Activated CD8-positive, alpha-beta T cell treated with anti-CD3 and anti-CD28 coated beads for 36 hours (primary cell): ENCODE measurements at regions of chrX and their contacts with region 1.

Region 1: GRCh38 chrX:149512225-149512885 is 7.2 kb upstream of the IDS start:
- DNase-seq: peak; percentile 69
- ATAC-seq: peak; percentile 71
- H3K4me3 Mint-ChIP-seq: no peak overlapping the region
- H3K27ac Mint-ChIP-seq: peak overlapping the region; percentile 78
- H3K4me1 Mint-ChIP-seq: peaks cover 46% of the 10 kb centered on the region
- H3K27me3 Mint-ChIP-seq: no peaks in the 10 kb centered on the region
- CTCF ChIP-seq: peak; percentile 53

Region 2: GRCh38 chrX:149313871-149314371 is 198.4 kb before region 1 on chrX:
- CTCF ChIA-PET with region 1: no interaction called
- POLR2A ChIA-PET with region 1: no interaction called
- intact Hi-C with region 1: no loop called
- DNase-seq: no peak
- ATAC-seq: no peak
- H3K4me3 Mint-ChIP-seq: no peak overlapping the region
- H3K27ac Mint-ChIP-seq: no peak overlapping the region
- H3K4me1 Mint-ChIP-seq: no peaks in the 10 kb centered on the region
- H3K27me3 Mint-ChIP-seq: no peaks in the 10 kb centered on the region
- CTCF ChIP-seq: no peak

Region 3: DNA sequence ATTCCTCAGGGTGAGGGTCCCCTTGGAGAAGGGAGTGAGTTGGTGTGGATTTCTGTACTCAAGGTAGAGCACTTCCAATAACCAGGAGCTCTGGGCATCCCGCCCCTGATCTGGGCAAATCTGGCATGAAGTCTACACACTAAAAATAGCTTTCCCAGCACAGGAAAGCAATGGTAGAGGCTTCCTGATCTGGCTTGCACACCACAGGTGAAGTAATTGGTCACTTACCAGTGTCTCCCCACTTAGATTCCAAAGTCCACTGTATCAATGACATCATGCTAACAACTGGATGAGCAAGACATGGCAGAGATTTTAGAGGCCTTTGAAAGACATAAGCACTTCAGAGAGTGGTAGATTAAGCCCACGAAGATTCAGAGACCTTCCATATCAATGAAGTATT is 10.6 kb after region 1 on chrX:
- CTCF ChIA-PET with region 1: interaction called, 34 read pairs
- POLR2A ChIA-PET with region 1: interaction called, 6 read pairs
- intact Hi-C with region 1: no loop called
- DNase-seq: no peak
- ATAC-seq: no peak
- H3K4me3 Mint-ChIP-seq: no peak overlapping the region
- H3K27ac Mint-ChIP-seq: no peak overlapping the region
- H3K4me1 Mint-ChIP-seq: peaks cover 50% of the 10 kb centered on the region
- H3K27me3 Mint-ChIP-seq: no peaks in the 10 kb centered on the region
- CTCF ChIP-seq: no peak